H1 (cell line): ENCODE measurements at regions of chr20 and their contacts with region 1.

Region 1: DNA sequence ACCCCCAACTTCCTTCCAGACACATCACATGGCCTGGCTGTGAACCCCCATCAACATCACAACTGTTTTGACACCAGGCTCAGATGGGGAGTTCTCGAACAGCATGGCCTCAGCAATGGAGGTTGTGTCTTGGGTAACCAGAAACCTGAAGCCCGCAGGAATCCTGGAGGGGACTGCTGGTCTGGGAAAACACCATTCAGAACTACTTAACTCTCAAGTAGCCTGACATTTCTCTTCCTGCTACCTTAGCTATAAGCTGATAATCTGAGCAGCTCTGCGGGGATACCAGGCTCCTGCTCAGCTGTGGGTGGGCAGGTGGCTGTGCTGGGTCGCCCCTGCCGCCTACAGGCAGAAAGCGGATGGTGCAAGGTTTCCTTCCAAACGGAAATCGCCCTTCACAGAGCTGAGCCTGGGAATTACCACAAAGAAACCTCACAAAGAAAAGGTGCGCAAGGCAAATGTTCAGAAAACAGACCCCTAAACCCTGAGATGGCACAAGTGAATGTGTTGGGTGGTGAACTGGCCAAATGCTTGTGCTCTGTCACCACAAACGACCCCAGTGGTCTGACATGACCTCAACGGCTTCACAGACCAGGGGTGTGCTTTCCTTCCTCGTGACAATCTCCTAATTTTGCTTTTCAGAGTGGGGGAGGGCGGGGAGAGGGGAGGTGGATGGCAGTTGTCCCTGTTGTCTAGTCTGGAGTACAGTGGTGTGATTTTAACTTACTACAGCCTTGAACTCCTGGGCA is 29.5 kb downstream of the SNX5 start:
- DNase-seq: peak; percentile 57 to 87
- H3K4me3 ChIP-seq: no peak overlapping the region
- H3K27ac ChIP-seq: peak overlapping the region; percentile 40; the same call in 1 of the 2 replicates
- H3K4me1 ChIP-seq: peaks cover 10 to 26% (median 17%) of the 10 kb centered on the region in 4 experiments
- H3K27me3 ChIP-seq: no peaks in the 10 kb centered on the region
- CTCF ChIP-seq: peak; percentile 92 to 99 (median 94)
- EP300 ChIP-seq: 0 out of 3 replicates have a peak, but pooled peaks of 1 of the 2 experiments have one; percentile 23
- POLR2A ChIP-seq: peak; percentile 50 to 65; a peak in 2 of 3 replicates
- RAD21 ChIP-seq: peak; percentile 94 to 98

Region 2: GRCh38 chr20:17504898-17505635 is 434.0 kb before region 1 on chr20:
- CTCF ChIA-PET with region 1: interaction called, 10 read pairs
- POLR2A ChIA-PET with region 1: interaction called, 7 read pairs
- DNase-seq: peak in 1 of 2 experiments; percentile 81
- H3K4me3 ChIP-seq: peak overlapping the region; percentile 4 to 55 (median 44); a peak in 7 of 8 replicates
- H3K27ac ChIP-seq: no peak overlapping the region
- H3K4me1 ChIP-seq: peaks cover 0 to 10% (median 3%) of the 10 kb centered on the region in 4 experiments; a peak in 4 of 7 replicates
- H3K27me3 ChIP-seq: peaks cover 0 to 9% (median 1%) of the 10 kb centered on the region in 4 experiments; a peak in 3 of 7 replicates
- CTCF ChIP-seq: peak in 2 of 3 experiments; percentile 45 to 50; a peak in 2 of 4 replicates
- EP300 ChIP-seq: no peak
- POLR2A ChIP-seq: no peak; a peak in 1 of 3 replicates
- RAD21 ChIP-seq: peak; percentile 71 to 83

Region 3: DNA sequence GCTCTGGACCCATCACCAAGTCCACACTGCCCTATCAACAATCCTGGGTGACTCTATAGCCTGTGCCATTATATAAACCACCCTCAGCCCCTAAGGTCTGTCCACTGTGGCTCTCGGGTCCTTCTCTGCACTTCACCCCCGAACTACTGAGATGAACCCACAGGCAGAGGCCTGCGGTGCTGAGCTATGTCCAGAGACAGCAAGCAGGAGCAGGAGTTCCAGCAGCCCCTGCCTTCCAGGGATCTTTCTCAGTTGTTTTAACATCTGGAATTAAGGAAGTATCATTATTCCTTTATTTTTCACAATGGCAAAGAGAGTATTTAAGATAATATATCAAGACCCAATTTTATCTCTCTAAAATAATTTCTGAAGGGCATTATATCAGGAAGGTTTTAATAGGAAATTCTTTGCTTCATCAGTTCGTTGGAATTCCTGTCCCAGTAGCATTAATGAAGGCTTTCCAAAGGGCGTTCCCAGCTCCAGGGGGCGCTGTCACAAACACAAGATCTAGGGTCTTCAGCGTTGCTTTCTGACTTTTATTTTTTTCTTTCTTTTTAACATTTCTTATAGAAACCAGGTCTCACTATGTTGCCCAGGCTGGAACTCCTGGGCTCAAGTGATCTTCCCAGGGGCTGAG is 284.3 kb before region 1 on chr20:
- CTCF ChIA-PET with region 1: interaction called, 26 read pairs
- POLR2A ChIA-PET with region 1: no interaction called
- DNase-seq: peak in 1 of 2 experiments; percentile 85
- H3K4me3 ChIP-seq: no peak overlapping the region
- H3K27ac ChIP-seq: no peak overlapping the region
- H3K4me1 ChIP-seq: peaks cover 6 to 9% (median 8%) of the 10 kb centered on the region in 4 experiments; a peak in 5 of 7 replicates
- H3K27me3 ChIP-seq: no peaks in the 10 kb centered on the region
- CTCF ChIP-seq: peak; percentile 55 to 72 (median 58); a peak in 3 of 4 replicates
- EP300 ChIP-seq: no peak
- POLR2A ChIP-seq: no peak
- RAD21 ChIP-seq: peak; percentile 23 to 52; a peak in 2 of 4 replicates

Region 4: DNA sequence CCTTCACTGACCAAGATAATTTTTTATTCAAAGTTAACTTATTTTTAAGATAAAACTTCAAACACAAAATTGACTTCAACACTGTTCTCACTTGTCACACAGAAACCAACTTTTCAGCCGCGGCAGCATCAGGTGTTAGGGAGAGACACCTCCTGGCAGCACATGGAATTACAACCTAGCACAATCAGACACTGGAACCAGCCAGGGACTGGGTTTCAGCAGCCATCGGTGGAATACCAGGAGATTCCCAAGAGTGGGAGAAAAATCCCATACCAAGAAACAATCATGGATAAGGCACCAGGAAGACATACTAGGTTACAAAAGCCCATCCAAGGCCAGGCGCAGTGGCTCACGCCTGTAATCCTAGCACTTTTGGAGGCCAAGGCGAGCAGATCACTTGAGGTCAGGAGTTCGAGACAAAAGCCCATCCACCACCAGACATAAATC is 40.5 kb before region 1 on chr20:
- CTCF ChIA-PET with region 1: interaction called, 17 read pairs
- POLR2A ChIA-PET with region 1: interaction called, 5 read pairs
- DNase-seq: peak in 1 of 2 experiments; percentile 81
- H3K4me3 ChIP-seq: no peak overlapping the region
- H3K27ac ChIP-seq: no peak overlapping the region
- H3K4me1 ChIP-seq: peaks cover 8 to 19% (median 12%) of the 10 kb centered on the region in 4 experiments
- H3K27me3 ChIP-seq: no peaks in the 10 kb centered on the region; a peak in 1 of 7 replicates
- CTCF ChIP-seq: peak; percentile 82 to 91 (median 88)
- EP300 ChIP-seq: no peak
- POLR2A ChIP-seq: no peak
- RAD21 ChIP-seq: peak; percentile 95 to 96

Region 5: GRCh38 chr20:17952692-17953684 is 13.9 kb after region 1 on chr20:
- CTCF ChIA-PET with region 1: interaction called, 25 read pairs
- POLR2A ChIA-PET with region 1: interaction called, 65 read pairs
- DNase-seq: no peak
- H3K4me3 ChIP-seq: no peak overlapping the region
- H3K27ac ChIP-seq: 0 out of 2 replicates have a peak overlapping the region, but pooled peaks have one; percentile 11
- H3K4me1 ChIP-seq: peaks cover 0 to 7% (median 0%) of the 10 kb centered on the region in 4 experiments; a peak in 2 of 7 replicates
- H3K27me3 ChIP-seq: no peaks in the 10 kb centered on the region
- CTCF ChIP-seq: no peak
- EP300 ChIP-seq: no peak
- POLR2A ChIP-seq: no peak; a peak in 1 of 3 replicates
- RAD21 ChIP-seq: no peak

Region 6: DNA sequence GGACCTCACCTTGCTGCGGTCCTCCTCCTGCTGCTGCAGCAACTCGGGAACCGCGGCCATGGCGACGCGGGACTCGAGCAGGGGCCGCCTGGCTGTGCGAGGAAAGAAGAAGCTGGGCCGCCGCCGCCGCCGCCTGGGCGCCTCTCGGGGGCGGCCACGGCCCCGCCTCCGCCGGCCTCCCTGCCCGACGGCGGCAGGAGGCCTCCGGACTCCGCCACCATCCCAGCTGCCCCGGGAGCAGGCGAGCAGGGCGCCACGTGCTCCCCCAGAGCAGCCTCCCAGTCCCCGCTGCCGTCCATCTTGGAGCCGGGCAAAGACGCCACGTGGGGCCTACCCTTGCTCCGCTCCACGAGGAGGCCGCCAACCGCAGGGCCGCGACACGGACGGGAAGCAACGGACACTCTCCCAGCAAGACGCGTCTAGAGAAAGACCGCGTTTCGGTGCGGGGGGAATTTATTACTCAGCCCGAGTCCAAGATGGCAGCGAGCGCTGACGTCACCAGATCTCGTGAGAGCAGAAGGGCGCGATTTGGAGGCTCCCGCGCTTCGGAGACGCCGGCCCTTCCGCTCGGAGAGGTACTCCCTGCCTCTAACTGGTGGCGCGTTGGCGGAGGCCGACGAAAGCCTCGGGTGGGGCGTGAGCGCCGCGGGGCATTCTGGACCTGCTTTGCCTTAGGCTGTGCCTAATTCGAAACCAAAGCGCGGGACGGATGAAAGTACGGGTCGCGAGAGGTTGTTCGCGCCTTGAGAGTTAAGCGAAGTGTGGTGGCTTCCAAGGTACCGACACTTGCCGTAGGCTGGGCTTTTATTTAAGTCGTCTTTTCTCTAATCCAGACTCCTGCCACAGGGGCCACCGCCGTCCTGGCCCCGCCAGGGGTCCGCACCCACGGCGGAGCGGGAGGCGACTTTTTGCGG is 29.6 kb after region 1 on chr20 and contains the starts of genes MGME1 and SNX5:
- CTCF ChIA-PET with region 1: interaction called, 4 read pairs
- POLR2A ChIA-PET with region 1: interaction called, 65 read pairs
- DNase-seq: peak; percentile 98 to 99
- H3K4me3 ChIP-seq: peak within 1 kb of the TSS; percentile 77 to 99 (median 91)
- H3K27ac ChIP-seq: peak within 1 kb of the TSS; percentile 100
- H3K4me1 ChIP-seq: peaks cover 5 to 14% (median 10%) of the 10 kb centered on the region in 4 experiments; a peak in 6 of 7 replicates
- H3K27me3 ChIP-seq: no peaks in the 10 kb centered on the region
- CTCF ChIP-seq: no peak
- EP300 ChIP-seq: no peak
- POLR2A ChIP-seq: peak; percentile 97 to 98
- RAD21 ChIP-seq: no peak
- total RNA-seq, gene MGME1: 56.3 and 59.0 TPM in 2 replicates
- total RNA-seq, gene SNX5: 181 and 194 TPM in 2 replicates